GM12878 (cell line): ENCODE measurements at regions of chr16 and their contacts with region 1.

Region 1: DNA sequence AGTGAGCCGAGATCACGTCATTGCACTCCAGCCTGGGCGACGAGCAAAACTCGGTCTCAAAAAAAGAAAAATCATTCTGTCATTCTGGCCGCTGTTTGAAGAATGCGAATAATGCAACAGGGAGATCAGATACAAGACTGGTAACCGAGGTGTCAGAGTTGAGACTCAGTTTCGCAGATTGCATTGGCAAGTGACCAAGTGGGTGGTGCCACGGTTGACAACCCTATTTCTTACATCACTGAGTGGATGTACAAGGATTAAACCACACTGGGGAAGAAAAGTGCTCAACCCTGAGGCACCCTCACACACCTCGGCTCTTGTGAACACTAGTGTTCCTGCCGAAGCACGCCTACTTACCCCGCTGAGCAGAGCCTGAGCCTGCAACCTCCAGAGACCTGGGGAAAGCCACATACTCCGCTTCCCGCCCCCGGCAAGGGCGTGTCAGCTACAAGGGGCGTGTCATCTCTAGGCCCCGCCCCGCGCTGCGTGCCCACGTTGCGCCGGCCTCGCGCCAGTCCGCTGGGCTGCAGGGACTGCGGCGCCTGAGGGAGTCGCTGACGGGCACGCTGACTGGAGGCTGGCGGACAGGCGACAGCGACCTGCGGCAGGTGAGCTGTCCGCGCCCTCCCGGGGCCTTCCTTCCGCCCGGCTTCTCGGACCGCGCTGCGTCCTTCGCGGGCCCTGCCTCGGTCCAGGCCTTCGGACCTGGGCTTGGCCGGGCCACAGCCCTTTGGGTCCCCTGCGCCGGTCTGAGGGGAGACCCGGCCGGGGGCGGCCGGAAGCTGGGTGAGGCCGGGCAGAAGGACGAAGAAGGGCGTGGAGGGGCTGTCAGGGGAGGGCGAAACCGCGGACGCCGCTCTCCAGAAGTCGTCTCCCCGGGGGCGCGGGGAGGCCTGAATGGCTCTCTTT is at the start of gene HMOX2:
- DNase-seq: peak; percentile 90
- ATAC-seq: peak; percentile 90
- H3K4me3 ChIP-seq: peak within 1 kb of the TSS; percentile 98
- H3K27ac ChIP-seq: peak within 1 kb of the TSS; percentile 77
- H3K4me1 ChIP-seq: peaks cover 4% of the 10 kb centered on the region; the same call in 1 of the 2 replicates
- H3K27me3 ChIP-seq: no peaks in the 10 kb centered on the region
- CTCF ChIP-seq: peak; percentile 52 to 63 (median 54); a peak in 5 of 6 replicates
- EP300 ChIP-seq: 0 out of 4 replicates have a peak, but pooled peaks of 1 of the 2 experiments have one; percentile 8
- POLR2A ChIP-seq: peak; percentile 99
- RAD21 ChIP-seq: no peak
- polyA plus RNA-seq, gene HMOX2: 26.4 to 37.7 TPM

Region 2: DNA sequence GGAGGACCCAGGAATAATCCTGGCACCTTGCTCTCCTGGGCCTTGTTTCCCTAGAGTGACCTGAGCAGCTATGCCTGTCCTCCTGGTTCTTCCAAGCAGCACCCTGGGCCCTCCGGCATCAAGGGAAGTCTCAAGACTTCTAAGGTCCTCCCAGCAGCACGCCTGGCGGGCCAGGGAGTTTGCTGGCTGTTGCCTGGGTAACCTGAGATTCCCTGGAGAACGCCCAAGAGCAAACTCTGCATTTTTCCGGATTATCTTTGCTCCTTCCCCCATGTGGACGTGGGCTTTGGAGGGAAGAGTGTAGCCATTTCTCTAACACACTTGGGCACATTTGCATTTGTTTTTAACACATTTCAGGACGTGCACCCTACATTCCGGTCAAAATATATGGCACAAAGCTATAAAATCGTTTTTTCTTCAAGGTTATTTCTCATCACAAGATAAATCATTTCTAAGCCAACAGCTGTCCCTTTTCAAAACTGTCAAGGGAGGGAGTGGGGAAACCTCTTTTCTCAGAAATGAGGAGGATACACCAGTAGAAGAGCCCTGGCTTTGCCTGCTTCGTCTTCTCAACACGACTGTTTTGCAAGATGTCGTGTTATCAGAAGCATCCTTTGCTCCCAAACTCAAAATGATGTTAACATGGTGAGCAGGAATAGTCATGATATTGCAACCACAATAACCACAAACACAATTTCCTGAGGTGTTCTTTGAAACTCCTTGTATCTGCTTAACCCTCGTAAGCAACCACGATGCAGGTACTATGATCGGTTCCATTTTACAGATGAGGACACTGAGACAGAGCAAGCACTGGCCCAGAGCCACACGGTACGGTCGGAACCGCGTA is 476.4 kb before region 1 on chr16:
- CTCF ChIA-PET with region 1: no interaction called
- POLR2A ChIA-PET with region 1: no interaction called
- RAD21 ChIA-PET with region 1: no interaction called
- SMC1A ChIA-PET with region 1: no interaction called
- in situ Hi-C with region 1: no loop called
- intact Hi-C with region 1: no loop called
- DNase-seq: no peak
- ATAC-seq: no peak
- H3K4me3 ChIP-seq: no peak overlapping the region
- H3K27ac ChIP-seq: no peak overlapping the region
- H3K4me1 ChIP-seq: no peaks in the 10 kb centered on the region
- H3K27me3 ChIP-seq: no peaks in the 10 kb centered on the region
- CTCF ChIP-seq: no peak
- EP300 ChIP-seq: no peak
- POLR2A ChIP-seq: no peak
- RAD21 ChIP-seq: no peak

Region 3: GRCh38 chr16:4350787-4351659 is 125.1 kb before region 1 on chr16 and contains the start of gene PAM16:
- CTCF ChIA-PET with region 1: no interaction called
- POLR2A ChIA-PET with region 1: interaction called, 10 read pairs
- RAD21 ChIA-PET with region 1: no interaction called
- SMC1A ChIA-PET with region 1: no interaction called
- in situ Hi-C with region 1: no loop called
- intact Hi-C with region 1: loop called (anchors 10 kb)
- DNase-seq: peak; percentile 88
- ATAC-seq: peak; percentile 97
- H3K4me3 ChIP-seq: peak within 1 kb of the TSS; percentile 78
- H3K27ac ChIP-seq: peak within 1 kb of the TSS; percentile 82
- H3K4me1 ChIP-seq: no peaks in the 10 kb centered on the region
- H3K27me3 ChIP-seq: no peaks in the 10 kb centered on the region
- CTCF ChIP-seq: no peak
- EP300 ChIP-seq: no peak
- POLR2A ChIP-seq: peak; percentile 88
- RAD21 ChIP-seq: no peak
- polyA plus RNA-seq, gene PAM16: 20.8 to 48.1 TPM

Region 4: GRCh38 chr16:4416200-4417032 is 59.7 kb before region 1 on chr16 and contains the start of gene CORO7:
- CTCF ChIA-PET with region 1: no interaction called
- POLR2A ChIA-PET with region 1: interaction called, 33 read pairs
- RAD21 ChIA-PET with region 1: interaction called, 3 read pairs
- SMC1A ChIA-PET with region 1: no interaction called
- in situ Hi-C with region 1: no loop called
- intact Hi-C with region 1: loop called (anchors 2 kb)
- DNase-seq: peak; percentile 76
- ATAC-seq: peak; percentile 86
- H3K4me3 ChIP-seq: peak within 1 kb of the TSS; percentile 92
- H3K27ac ChIP-seq: peak within 1 kb of the TSS; percentile 83
- H3K4me1 ChIP-seq: peaks cover 20% of the 10 kb centered on the region
- H3K27me3 ChIP-seq: no peaks in the 10 kb centered on the region
- CTCF ChIP-seq: no peak
- EP300 ChIP-seq: 0 out of 4 replicates have a peak, but pooled peaks of 1 of the 2 experiments have one; percentile 7
- POLR2A ChIP-seq: peak; percentile 94
- RAD21 ChIP-seq: no peak
- polyA plus RNA-seq, gene CORO7: 0.64 to 0.84 TPM

Region 5: DNA sequence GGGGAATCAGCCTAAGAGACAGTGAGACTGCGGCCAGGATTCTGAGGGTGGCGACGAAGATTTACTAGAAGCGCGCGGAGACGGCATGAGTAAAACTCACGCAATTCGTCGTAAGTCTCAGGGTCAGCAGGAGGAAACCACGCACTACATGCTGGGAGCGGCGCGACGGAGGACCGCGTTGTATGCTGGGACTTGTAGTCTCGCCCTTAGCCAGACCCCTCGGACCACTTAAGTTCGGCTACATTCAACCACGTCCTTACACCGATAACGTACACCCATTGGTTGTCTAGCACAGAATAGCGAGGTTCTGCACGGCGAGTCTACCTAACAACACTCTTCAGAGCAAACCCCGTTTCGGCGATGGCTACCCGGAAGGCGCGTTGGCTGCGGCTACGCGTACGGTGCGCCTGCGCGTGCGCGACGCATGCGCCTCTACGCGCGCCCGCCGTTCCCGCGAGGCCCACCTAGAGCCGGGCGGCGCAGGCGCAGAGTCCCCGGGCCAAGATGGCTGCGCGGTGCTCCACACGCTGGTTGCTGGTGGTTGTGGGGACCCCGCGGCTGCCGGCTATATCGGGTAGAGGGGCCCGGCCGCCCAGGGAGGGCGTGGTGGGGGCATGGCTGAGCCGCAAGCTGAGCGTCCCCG is 50.6 kb before region 1 on chr16 and contains the start of gene DNAJA3:
- CTCF ChIA-PET with region 1: no interaction called
- POLR2A ChIA-PET with region 1: interaction called, 4 read pairs
- RAD21 ChIA-PET with region 1: no interaction called
- SMC1A ChIA-PET with region 1: no interaction called
- in situ Hi-C with region 1: no loop called
- intact Hi-C with region 1: loop called (anchors 5 kb)
- DNase-seq: peak; percentile 91
- ATAC-seq: peak; percentile 95
- H3K4me3 ChIP-seq: peak within 1 kb of the TSS; percentile 92
- H3K27ac ChIP-seq: peak within 1 kb of the TSS; percentile 100
- H3K4me1 ChIP-seq: no peaks in the 10 kb centered on the region
- H3K27me3 ChIP-seq: no peaks in the 10 kb centered on the region
- CTCF ChIP-seq: no peak
- EP300 ChIP-seq: no peak
- POLR2A ChIP-seq: peak; percentile 98
- RAD21 ChIP-seq: no peak
- polyA plus RNA-seq, gene DNAJA3: 8.4 to 20.4 TPM

Region 6: DNA sequence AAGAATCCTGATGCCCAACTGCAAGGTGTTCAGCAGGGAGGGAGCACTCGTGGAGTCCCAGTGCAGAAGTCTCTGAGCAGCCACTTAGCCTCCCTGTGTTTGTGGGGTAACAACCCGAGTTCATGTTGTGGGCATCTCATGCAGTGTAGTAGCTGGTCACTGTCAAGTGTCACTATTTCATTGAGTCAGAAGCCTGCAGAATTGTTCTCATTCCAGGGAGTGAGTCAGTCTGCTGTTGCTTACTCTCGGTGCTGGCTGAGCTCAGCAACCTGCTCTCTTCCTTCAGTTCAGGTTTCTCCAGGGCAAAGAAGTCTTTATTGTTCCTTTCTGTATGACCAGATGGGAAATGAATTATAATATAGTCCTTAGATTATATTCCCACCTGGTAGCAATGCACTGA is 24.1 kb after region 1 on chr16:
- CTCF ChIA-PET with region 1: interaction called, 12 read pairs
- POLR2A ChIA-PET with region 1: interaction called, 10 read pairs
- RAD21 ChIA-PET with region 1: interaction called, 14 read pairs
- SMC1A ChIA-PET with region 1: interaction called, 4 read pairs
- in situ Hi-C with region 1: no loop called
- intact Hi-C with region 1: loop called (anchors 2 kb)
- DNase-seq: no peak
- ATAC-seq: no peak
- H3K4me3 ChIP-seq: no peak overlapping the region
- H3K27ac ChIP-seq: no peak overlapping the region
- H3K4me1 ChIP-seq: peaks cover 6% of the 10 kb centered on the region
- H3K27me3 ChIP-seq: no peaks in the 10 kb centered on the region
- CTCF ChIP-seq: no peak
- EP300 ChIP-seq: no peak
- POLR2A ChIP-seq: no peak
- RAD21 ChIP-seq: no peak

Region 7: GRCh38 chr16:4787627-4788482 is 311.7 kb after region 1 on chr16 and contains the start of gene SEPTIN12:
- CTCF ChIA-PET with region 1: no interaction called
- POLR2A ChIA-PET with region 1: no interaction called
- RAD21 ChIA-PET with region 1: no interaction called
- SMC1A ChIA-PET with region 1: no interaction called
- in situ Hi-C with region 1: no loop called
- intact Hi-C with region 1: no loop called
- DNase-seq: no peak
- ATAC-seq: no peak
- H3K4me3 ChIP-seq: no peak within 1 kb of the TSS
- H3K27ac ChIP-seq: no peak within 1 kb of the TSS
- H3K4me1 ChIP-seq: no peaks in the 10 kb centered on the region
- H3K27me3 ChIP-seq: no peaks in the 10 kb centered on the region
- CTCF ChIP-seq: no peak
- EP300 ChIP-seq: no peak
- POLR2A ChIP-seq: no peak
- RAD21 ChIP-seq: no peak
- polyA plus RNA-seq, gene SEPTIN12: not detected